Transverse colon (tissue), 4 donors: ENCODE measurements at regions of chr11 and their contacts with region 1.

Region 1: DNA sequence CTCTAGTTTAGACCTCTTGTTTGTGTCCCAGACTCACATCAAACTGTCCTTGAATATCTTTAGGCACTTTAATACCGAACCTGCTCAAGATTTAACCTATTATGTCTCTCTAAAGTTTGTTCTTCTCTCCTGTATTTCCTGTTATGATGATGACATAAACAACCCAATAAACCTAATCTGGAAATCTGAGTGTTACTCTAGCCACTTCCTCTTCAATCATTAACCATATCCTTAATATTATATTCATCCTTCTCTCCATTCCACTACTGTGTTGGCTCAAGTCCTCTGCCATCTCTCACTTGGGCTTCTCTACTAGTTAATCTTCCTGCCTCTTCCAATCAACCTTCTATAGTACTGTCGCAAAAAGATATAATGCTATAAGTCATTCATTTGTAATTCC is 36.0 kb downstream of the COPB1 start:
- DNase-seq: no peak
- H3K4me3 ChIP-seq: no peak overlapping the region
- H3K27ac ChIP-seq: no peak overlapping the region
- H3K4me1 ChIP-seq: peaks cover 0 to 3% (median 0%) of the 10 kb centered on the region in 4 donors
- H3K27me3 ChIP-seq: no peaks in the 10 kb centered on the region
- CTCF ChIP-seq: no peak
- EP300 ChIP-seq: no peak
- POLR2A ChIP-seq: no peak

Region 2: GRCh38 chr11:14480716-14481115 is 17.1 kb after region 1 on chr11:
- in situ Hi-C with region 1: no loop called
- intact Hi-C with region 1: loop called (anchors 1 kb)
- DNase-seq: no peak
- H3K4me3 ChIP-seq: no peak overlapping the region
- H3K27ac ChIP-seq: no peak overlapping the region
- H3K4me1 ChIP-seq: no peaks in the 10 kb centered on the region
- H3K27me3 ChIP-seq: no peaks in the 10 kb centered on the region
- CTCF ChIP-seq: no peak
- EP300 ChIP-seq: no peak
- POLR2A ChIP-seq: no peak